Aorta (tissue), 5 donors: ENCODE measurements at regions of chrX and their contacts with region 1.

Region 1: DNA sequence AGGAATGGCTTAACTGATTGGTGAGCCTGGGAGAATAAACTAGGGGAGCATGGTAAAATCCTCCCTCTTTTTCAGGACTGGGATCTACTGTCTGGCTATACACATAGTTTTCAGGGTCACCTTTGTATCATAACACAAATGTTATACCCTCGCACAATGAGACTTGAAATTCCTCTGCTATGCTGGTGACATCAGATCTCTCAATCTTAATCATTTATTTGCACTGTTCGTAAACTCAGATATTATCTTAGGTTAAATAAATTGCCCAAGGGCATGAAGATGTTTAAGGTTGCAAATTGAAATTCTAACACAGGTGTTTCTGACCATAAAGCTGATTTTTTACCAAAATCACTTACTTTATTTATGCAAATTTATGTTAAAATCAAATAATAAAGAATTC is 369.5 kb upstream of the CT83 start:
- DNase-seq: no peak
- ATAC-seq: no peak
- H3K4me3 ChIP-seq: no peak overlapping the region
- H3K27ac ChIP-seq: no peak overlapping the region
- H3K4me1 ChIP-seq: no peaks in the 10 kb centered on the region
- H3K27me3 ChIP-seq: no peaks in the 10 kb centered on the region

Region 2: GRCh38 chrX:116399681-116400080 is 432.6 kb before region 1 on chrX:
- intact Hi-C with region 1: no loop called
- DNase-seq: no peak
- ATAC-seq: no peak
- H3K4me3 ChIP-seq: no peak overlapping the region
- H3K27ac ChIP-seq: no peak overlapping the region
- H3K4me1 ChIP-seq: no peaks in the 10 kb centered on the region
- H3K27me3 ChIP-seq: no peaks in the 10 kb centered on the region

Region 3: GRCh38 chrX:116756958-116757357 is 75.3 kb before region 1 on chrX:
- intact Hi-C with region 1: loop called in 1 of 2 experiments (anchors 10 kb)
- DNase-seq: no peak
- ATAC-seq: peak; percentile 64
- H3K4me3 ChIP-seq: no peak overlapping the region
- H3K27ac ChIP-seq: no peak overlapping the region
- H3K4me1 ChIP-seq: no peaks in the 10 kb centered on the region
- H3K27me3 ChIP-seq: no peaks in the 10 kb centered on the region

Region 4: GRCh38 chrX:118164138-118164537 is 1331.9 kb after region 1 on chrX:
- intact Hi-C with region 1: no loop called
- DNase-seq: no peak
- ATAC-seq: no peak
- H3K4me3 ChIP-seq: no peak overlapping the region
- H3K27ac ChIP-seq: no peak overlapping the region
- H3K4me1 ChIP-seq: no peaks in the 10 kb centered on the region
- H3K27me3 ChIP-seq: no peaks in the 10 kb centered on the region